Left ventricle myocardium superior (tissue), 1 donor: ENCODE measurements at regions of chr3 and their contacts with region 1.

Region 1: GRCh38 chr3:150870396-150870795 is 34.8 kb downstream of the MINDY4B start:
- DNase-seq: no peak
- ATAC-seq: peak; percentile 58

Region 2: GRCh38 chr3:150721285-150722130 is 148.9 kb before region 1 on chr3:
- intact Hi-C with region 1: loop called (anchors 2 kb)
- DNase-seq: no peak
- ATAC-seq: peak; percentile 73